PC-3 (cell line): ENCODE measurements at regions of chr19 and their contacts with region 1.

Region 1: GRCh38 chr19:14571695-14572490 is at the start of gene NDUFB7:
- DNase-seq: peak; percentile 97
- ATAC-seq: peak; percentile 92
- H3K4me3 ChIP-seq: peak within 1 kb of the TSS; percentile 100
- H3K27ac ChIP-seq: peak within 1 kb of the TSS; percentile 66
- H3K4me1 ChIP-seq: peaks cover 13% of the 10 kb centered on the region
- H3K27me3 ChIP-seq: no peaks in the 10 kb centered on the region
- CTCF ChIP-seq: peak; percentile 84
- total RNA-seq, gene NDUFB7: 1,095 and 1,098 TPM in 2 replicates

Region 2: DNA sequence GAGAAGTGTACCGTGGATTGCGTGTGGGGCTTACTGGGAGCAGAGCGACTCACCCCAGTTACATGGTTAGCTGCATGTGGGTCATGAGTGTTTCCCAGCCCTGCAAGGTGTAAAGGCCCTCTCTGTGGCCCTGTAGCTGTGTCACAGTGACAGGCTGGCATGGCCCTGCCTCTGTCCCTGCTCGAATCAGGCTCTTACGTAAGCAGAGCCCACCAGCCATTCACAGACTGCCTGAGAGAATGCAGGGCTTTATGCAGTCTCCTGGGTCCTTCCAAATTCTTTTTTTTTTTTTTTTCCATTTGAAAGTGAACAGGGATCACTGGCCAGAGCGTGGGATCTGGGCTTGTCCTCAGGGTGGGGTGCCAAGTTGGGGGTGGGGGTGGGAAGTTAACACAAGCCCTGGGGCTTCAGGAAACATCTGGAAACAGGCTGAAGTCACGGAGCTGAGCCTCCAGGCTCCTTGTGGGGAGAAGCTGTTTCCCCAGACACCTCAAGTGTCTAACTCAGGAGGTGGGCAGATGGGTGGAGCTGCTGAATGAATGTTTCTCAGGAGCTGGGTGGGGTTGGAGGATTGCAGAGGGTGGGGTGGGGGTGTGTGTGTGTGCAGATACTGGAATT is 29.1 kb before region 1 on chr19:
- CTCF ChIA-PET with region 1: no interaction called
- POLR2A ChIA-PET with region 1: no interaction called
- intact Hi-C with region 1: no loop called
- DNase-seq: no peak
- ATAC-seq: peak; percentile 44; the same call in 1 of the 2 replicates
- H3K4me3 ChIP-seq: no peak overlapping the region
- H3K27ac ChIP-seq: no peak overlapping the region
- H3K4me1 ChIP-seq: no peaks in the 10 kb centered on the region
- H3K27me3 ChIP-seq: no peaks in the 10 kb centered on the region
- CTCF ChIP-seq: no peak

Region 3: GRCh38 chr19:14603990-14604387 is 32.1 kb after region 1 on chr19:
- CTCF ChIA-PET with region 1: no interaction called
- POLR2A ChIA-PET with region 1: no interaction called
- intact Hi-C with region 1: no loop called
- DNase-seq: no peak
- ATAC-seq: no peak
- H3K4me3 ChIP-seq: no peak overlapping the region
- H3K27ac ChIP-seq: no peak overlapping the region
- H3K4me1 ChIP-seq: no peaks in the 10 kb centered on the region
- H3K27me3 ChIP-seq: no peaks in the 10 kb centered on the region
- CTCF ChIP-seq: no peak

Region 4: DNA sequence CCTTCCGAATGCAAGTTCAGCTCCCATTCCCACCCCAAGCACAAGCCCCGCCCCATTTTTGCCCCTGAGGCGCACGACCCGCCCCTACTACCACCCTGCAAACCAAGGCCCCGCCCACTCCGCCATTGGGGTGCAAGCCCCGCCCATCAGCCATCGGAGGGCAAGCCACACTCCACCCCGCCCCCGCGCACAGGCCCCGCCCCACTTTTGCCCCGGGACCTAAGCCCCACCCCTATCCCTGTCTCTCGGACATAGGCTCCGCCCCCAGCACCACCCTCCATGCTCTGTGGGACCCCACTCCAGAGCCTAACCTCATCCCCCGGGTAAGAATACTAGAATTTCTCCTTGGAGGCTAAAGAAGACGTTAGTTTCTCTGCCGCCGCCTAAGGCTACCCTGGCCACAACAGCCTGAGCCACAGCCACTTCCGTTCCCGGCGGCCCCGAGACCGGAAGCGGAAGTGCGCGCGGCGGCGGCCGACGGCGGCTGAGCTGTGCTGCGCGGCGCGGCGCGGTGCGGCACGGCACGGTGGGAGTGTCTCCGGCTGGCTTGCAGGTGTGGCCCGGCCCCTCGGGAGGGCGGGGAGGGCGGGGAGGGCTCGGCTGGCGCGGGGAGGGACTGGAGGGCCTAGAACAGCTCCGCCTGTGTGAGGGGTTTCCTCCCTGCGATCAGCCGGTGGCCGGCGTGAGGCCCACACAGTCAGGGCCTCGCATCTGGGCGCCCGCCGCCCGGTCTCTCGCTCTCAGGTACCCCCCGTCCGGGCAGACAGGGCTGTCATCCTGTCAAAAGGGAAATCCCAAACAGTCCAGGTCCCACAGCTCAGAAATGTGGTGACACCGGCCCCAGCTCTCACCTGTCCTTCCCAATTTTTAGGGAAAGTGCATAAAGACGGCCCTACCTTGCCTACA is 118.0 kb after region 1 on chr19 and contains the start of gene ZNF333:
- CTCF ChIA-PET with region 1: interaction called, 147 read pairs
- POLR2A ChIA-PET with region 1: interaction called, 6 read pairs
- intact Hi-C with region 1: loop called (anchors 1 kb)
- DNase-seq: peak; percentile 90
- ATAC-seq: peak; percentile 96
- H3K4me3 ChIP-seq: peak within 1 kb of the TSS; percentile 96
- H3K27ac ChIP-seq: peak within 1 kb of the TSS; percentile 88
- H3K4me1 ChIP-seq: peaks cover 7% of the 10 kb centered on the region; the same call in 1 of the 2 replicates
- H3K27me3 ChIP-seq: no peaks in the 10 kb centered on the region
- CTCF ChIP-seq: no peak
- total RNA-seq, gene ZNF333: 6.2 and 11.6 TPM in 2 replicates

Region 5: GRCh38 chr19:14786421-14786851 is 214.5 kb after region 1 on chr19:
- CTCF ChIA-PET with region 1: interaction called, 18 read pairs
- POLR2A ChIA-PET with region 1: no interaction called
- intact Hi-C with region 1: no loop called
- DNase-seq: peak; percentile 42
- ATAC-seq: no peak
- H3K4me3 ChIP-seq: peak overlapping the region; percentile 35
- H3K27ac ChIP-seq: no peak overlapping the region
- H3K4me1 ChIP-seq: peaks cover 12% of the 10 kb centered on the region
- H3K27me3 ChIP-seq: peaks cover 3% of the 10 kb centered on the region; the same call in 1 of the 2 replicates
- CTCF ChIP-seq: peak; percentile 95

Region 6: DNA sequence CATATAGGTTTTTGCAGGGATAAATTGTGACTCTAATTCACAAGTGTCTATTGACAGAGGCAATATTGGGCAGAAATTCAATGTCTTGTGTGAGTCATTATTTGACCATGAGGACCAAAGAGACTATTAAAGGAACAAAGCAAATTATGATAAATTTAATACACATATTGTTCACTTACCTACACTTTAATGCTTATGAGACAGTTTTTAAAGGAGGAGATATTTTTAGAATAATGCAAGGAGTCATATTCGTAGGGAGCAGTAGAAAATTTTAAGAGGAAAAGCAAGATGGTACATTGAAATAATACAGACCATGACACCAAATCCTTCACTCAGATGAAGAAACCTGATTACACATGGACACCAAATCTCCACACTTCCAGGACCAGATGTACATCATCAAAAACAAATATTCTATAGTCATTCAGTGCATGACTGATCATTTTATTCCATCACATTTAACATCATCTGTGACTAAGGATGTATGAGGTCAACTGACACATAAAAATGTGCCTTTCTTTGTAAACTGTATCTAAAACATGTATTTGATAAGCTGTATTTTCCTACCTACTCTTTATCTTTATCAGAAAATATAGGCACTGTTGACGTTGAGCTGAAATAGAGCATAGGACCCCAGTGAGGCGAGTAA is 318.2 kb after region 1 on chr19:
- CTCF ChIA-PET with region 1: no interaction called
- POLR2A ChIA-PET with region 1: no interaction called
- intact Hi-C with region 1: loop called (anchors 2 kb)
- DNase-seq: peak; percentile 62
- ATAC-seq: peak; percentile 39
- H3K4me3 ChIP-seq: no peak overlapping the region
- H3K27ac ChIP-seq: peak overlapping the region; percentile 21; the same call in 1 of the 2 replicates
- H3K4me1 ChIP-seq: peaks cover 17% of the 10 kb centered on the region
- H3K27me3 ChIP-seq: peaks cover 22% of the 10 kb centered on the region
- CTCF ChIP-seq: no peak